PC-3 (cell line): ENCODE measurements at regions of chr1 and their contacts with region 1.

Region 1: GRCh38 chr1:46223472-46223943 is 20.4 kb downstream of the LURAP1 start:
- DNase-seq: peak; percentile 94
- ATAC-seq: peak; percentile 95
- H3K4me3 ChIP-seq: no peak overlapping the region
- H3K27ac ChIP-seq: peak overlapping the region; percentile 21
- H3K4me1 ChIP-seq: peaks cover 5% of the 10 kb centered on the region; the same call in 1 of the 2 replicates
- H3K27me3 ChIP-seq: no peaks in the 10 kb centered on the region
- CTCF ChIP-seq: peak; percentile 97

Region 2: DNA sequence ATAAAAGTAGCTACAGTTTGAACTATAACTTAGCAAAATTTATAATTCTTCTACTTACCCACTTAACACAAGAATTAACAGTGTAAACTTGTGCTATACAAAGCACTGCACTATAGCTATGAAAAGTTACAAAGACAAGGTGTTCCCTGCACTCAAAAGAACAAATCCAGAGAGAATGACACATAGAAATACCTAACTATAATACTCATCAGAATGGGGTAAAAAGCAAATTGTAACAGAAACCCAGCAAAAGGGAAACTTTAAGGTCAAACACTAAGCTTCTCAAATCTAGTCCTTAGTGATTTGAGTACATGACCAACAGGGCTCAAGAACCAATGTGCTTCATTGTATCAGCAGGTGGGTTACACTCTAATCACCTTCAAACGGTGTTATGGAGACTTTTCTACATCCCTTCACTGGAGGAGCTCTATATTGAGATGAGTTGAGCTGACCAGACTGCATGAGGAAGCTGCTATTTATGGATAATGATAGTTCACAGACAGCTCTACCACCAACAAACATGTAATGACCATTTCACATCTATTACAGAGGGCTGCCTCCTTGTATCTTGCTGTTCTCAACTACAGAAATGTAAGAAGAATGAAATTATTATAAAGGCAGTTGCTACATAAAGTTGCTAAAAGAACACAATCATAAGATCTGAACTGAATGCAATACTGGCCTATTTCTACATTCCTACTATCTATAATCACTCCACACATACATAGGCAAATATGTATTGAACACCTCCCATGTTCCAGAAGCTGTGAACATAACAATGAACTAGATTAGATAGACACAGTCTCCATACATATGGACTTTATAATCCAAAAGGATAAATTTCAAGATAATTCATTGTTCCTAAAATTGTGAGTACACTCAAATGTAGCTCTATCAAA is 138.7 kb before region 1 on chr1:
- CTCF ChIA-PET with region 1: no interaction called
- POLR2A ChIA-PET with region 1: interaction called, 10 read pairs
- intact Hi-C with region 1: no loop called
- DNase-seq: peak; percentile 70
- ATAC-seq: peak; percentile 93
- H3K4me3 ChIP-seq: peak overlapping the region; percentile 27; the same call in 1 of the 2 replicates
- H3K27ac ChIP-seq: peak overlapping the region; percentile 59
- H3K4me1 ChIP-seq: peaks cover 28% of the 10 kb centered on the region
- H3K27me3 ChIP-seq: no peaks in the 10 kb centered on the region
- CTCF ChIP-seq: no peak

Region 3: DNA sequence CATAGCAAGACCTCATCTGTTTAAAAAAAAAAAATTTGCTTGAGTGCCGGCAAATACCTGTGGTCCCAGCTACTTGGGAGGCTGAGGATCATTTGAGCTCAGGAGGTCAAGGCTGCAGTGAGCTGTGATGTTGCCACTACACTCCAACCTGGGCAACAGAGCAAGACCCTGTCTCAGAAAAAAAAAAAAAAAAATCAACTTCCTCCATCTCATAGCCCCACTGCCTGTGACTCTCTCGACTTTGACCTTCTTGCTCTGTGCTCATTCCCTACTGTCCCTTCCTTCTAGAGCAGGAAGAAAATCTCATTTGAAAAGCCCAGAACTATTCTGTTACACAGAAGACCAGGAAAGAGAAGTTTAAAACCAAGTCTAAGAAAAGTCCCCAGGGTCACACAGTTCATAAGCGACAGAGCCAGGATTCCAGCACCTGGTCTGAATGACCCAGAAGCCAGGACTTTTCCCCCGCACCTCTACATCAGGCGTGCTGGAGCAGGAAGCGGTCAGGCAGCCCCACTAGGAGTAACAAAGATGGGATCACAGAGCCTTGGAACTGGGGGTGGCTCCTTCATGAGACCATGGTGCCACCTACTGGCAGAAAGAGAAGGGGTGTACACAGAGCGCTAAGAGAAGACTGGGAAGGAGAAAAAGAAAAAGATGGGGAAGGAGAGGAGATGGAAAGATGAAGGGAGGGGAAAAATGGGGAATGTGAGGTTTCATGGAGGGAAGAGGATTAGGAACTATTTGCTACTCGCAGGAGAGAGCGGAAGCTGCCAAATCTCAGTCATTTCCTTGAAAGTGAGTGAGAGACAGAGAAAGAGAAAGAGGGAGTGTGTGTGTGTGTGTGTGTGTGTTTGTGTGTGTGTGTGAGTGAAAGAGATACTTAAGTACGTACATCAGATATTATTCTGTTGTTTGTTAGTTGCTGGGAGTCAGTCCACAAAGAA is 44.1 kb before region 1 on chr1:
- CTCF ChIA-PET with region 1: interaction called, 58 read pairs
- POLR2A ChIA-PET with region 1: interaction called, 5 read pairs
- intact Hi-C with region 1: loop called (anchors 1 kb)
- DNase-seq: peak; percentile 89
- ATAC-seq: peak; percentile 49
- H3K4me3 ChIP-seq: no peak overlapping the region
- H3K27ac ChIP-seq: peak overlapping the region; percentile 99
- H3K4me1 ChIP-seq: peaks cover 49% of the 10 kb centered on the region
- H3K27me3 ChIP-seq: no peaks in the 10 kb centered on the region
- CTCF ChIP-seq: peak; percentile 96

Region 4: DNA sequence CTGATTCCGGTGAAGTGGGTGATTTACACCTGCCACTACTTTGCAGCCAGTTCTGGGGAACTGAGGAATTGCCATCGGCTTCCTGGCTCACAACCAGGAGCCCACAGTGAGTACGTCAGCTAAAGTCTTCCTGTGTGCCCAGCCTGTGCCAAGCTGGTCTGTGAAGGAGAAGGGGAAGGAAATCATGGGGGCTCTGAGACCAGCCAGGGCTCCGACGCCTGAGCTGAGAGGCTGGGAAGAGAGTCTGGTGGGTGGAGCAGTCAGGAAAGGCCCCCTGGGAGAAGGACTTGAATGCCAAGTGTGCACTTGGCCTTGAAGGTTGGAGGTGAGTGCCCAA is 19.1 kb before region 1 on chr1:
- CTCF ChIA-PET with region 1: interaction called, 15 read pairs
- POLR2A ChIA-PET with region 1: no interaction called
- intact Hi-C with region 1: no loop called
- DNase-seq: no peak
- ATAC-seq: no peak
- H3K4me3 ChIP-seq: no peak overlapping the region
- H3K27ac ChIP-seq: no peak overlapping the region
- H3K4me1 ChIP-seq: no peaks in the 10 kb centered on the region
- H3K27me3 ChIP-seq: no peaks in the 10 kb centered on the region
- CTCF ChIP-seq: no peak

Region 5: DNA sequence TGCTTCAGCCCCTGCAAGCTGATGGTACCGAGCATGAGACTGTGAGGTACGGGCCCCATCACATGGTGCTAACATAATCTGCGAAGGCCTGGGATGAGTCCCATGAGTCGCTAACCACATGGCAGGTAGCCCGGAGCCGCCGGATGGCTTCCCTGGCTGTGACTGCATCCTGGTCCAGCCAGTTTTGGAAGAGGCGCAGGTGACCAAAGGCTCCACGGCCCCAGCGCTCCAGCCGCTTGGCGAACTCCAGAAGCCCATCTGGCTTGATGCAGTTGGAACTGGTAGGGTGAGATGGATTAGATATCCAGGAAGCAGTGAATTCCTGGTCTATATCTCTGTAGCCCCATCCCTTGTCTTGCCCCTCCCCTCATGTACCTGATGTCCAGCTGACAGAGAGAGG is 55.3 kb after region 1 on chr1:
- CTCF ChIA-PET with region 1: no interaction called
- POLR2A ChIA-PET with region 1: no interaction called
- intact Hi-C with region 1: no loop called
- DNase-seq: peak; percentile 80
- ATAC-seq: peak; percentile 71
- H3K4me3 ChIP-seq: no peak overlapping the region
- H3K27ac ChIP-seq: peak overlapping the region; percentile 25
- H3K4me1 ChIP-seq: peaks cover 8% of the 10 kb centered on the region; the same call in 1 of the 2 replicates
- H3K27me3 ChIP-seq: no peaks in the 10 kb centered on the region
- CTCF ChIP-seq: no peak